ENCODE measurements at regions of chr17 and their contacts with region 1.

Region 1: DNA sequence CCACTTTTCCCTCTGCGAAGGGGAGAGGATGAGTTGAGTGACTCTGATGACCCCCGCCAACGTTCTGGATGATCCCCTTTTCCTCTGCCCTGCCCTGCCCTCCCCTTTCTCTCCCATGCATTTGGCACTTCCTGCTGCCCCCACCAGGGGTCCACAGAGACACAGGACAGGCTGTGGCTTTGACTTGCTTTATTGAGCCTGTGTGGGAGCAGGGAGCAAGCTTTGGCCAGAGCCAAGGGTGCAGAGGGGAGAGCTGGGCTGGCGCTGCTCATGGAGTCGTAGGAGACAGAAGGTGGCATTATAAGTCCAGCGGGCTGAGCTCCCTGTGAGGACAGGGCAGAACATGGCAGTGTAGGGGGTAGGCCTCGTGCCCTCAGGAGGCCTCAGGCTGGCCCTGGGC is 1.6 kb downstream of the PPY start:
- DNase-seq: peak; percentile 77
- ATAC-seq: peak; percentile 74
- H3K4me3 Mint-ChIP-seq: no peak overlapping the region
- H3K27ac Mint-ChIP-seq: no peak overlapping the region
- H3K4me1 Mint-ChIP-seq: peaks cover 20% of the 10 kb centered on the region
- H3K27me3 Mint-ChIP-seq: peaks cover 46% of the 10 kb centered on the region
- CTCF ChIP-seq: peak; percentile 56

Region 2: GRCh38 chr17:43720311-43721060 is 220.1 kb before region 1 on chr17:
- CTCF ChIA-PET with region 1: no interaction called
- POLR2A ChIA-PET with region 1: no interaction called
- DNase-seq: peak; percentile 81
- ATAC-seq: peak; percentile 92
- H3K4me3 Mint-ChIP-seq: peak overlapping the region; percentile 81
- H3K27ac Mint-ChIP-seq: peak overlapping the region; percentile 42
- H3K4me1 Mint-ChIP-seq: peaks cover 33% of the 10 kb centered on the region
- H3K27me3 Mint-ChIP-seq: peaks cover 31% of the 10 kb centered on the region
- CTCF ChIP-seq: no peak

Region 3: GRCh38 chr17:43740541-43740940 is 200.1 kb before region 1 on chr17:
- CTCF ChIA-PET with region 1: no interaction called
- POLR2A ChIA-PET with region 1: no interaction called
- DNase-seq: no peak
- ATAC-seq: no peak
- H3K4me3 Mint-ChIP-seq: no peak overlapping the region
- H3K27ac Mint-ChIP-seq: no peak overlapping the region
- H3K4me1 Mint-ChIP-seq: peaks cover 31% of the 10 kb centered on the region
- H3K27me3 Mint-ChIP-seq: no peaks in the 10 kb centered on the region; the same call in 1 of the 2 replicates
- CTCF ChIP-seq: no peak

Region 4: GRCh38 chr17:43878260-43879175 is 62.1 kb before region 1 on chr17:
- CTCF ChIA-PET with region 1: interaction called, 16 read pairs
- POLR2A ChIA-PET with region 1: no interaction called
- DNase-seq: peak; percentile 89
- ATAC-seq: peak; percentile 83
- H3K4me3 Mint-ChIP-seq: no peak overlapping the region
- H3K27ac Mint-ChIP-seq: no peak overlapping the region
- H3K4me1 Mint-ChIP-seq: peaks cover 14% of the 10 kb centered on the region
- H3K27me3 Mint-ChIP-seq: no peaks in the 10 kb centered on the region
- CTCF ChIP-seq: peak; percentile 91

Region 5: GRCh38 chr17:43917348-43918018 is 23.1 kb before region 1 on chr17:
- CTCF ChIA-PET with region 1: interaction called, 49 read pairs
- POLR2A ChIA-PET with region 1: no interaction called
- DNase-seq: peak; percentile 78
- ATAC-seq: peak; percentile 87
- H3K4me3 Mint-ChIP-seq: peak overlapping the region; percentile 43
- H3K27ac Mint-ChIP-seq: no peak overlapping the region
- H3K4me1 Mint-ChIP-seq: peaks cover 27% of the 10 kb centered on the region
- H3K27me3 Mint-ChIP-seq: peaks cover 14% of the 10 kb centered on the region
- CTCF ChIP-seq: no peak; the same call in 1 of the 2 replicates

Region 6: DNA sequence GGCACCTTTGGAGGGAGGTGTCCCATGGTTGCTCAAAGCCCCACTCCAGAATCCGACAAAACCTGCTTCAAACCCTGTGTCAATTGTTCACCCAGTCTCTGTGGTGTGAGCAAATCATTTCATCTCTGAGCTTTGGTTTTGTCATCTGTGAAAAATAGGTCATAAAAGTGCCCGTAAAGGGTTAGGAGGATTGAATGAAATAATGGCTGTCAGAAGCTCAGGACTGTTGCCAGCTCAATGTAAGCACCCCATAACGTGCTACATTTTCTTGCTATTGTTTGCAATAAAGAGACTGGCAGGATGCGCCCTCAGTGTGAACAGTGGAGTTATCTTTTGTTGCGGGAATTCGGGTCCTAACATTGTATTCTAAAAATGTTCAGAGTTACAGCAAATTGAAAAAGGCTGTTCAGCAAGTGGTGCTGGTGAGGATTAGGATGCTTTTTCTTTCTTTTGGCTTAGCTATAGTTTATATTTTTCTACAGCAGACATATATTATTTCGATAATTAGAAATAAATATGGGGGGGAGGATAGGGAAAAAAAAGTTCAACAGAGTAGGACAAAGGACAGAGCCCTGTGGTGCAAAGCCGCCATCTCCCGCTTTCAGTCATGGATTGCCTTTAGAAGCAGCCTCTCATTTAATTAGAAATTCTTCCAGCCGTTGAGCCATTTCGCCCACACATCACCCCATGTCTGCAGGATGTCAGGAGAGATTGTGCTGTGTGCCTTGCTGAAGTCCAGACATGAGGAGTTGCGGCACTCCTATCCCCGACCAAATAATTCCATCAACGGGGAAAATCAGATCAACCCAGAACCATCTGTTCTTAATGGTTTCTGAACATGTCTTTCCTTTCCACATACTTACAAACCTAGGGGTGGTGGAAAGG is 34.0 kb after region 1 on chr17:
- CTCF ChIA-PET with region 1: interaction called, 15 read pairs
- POLR2A ChIA-PET with region 1: no interaction called
- DNase-seq: no peak
- ATAC-seq: no peak
- H3K4me3 Mint-ChIP-seq: no peak overlapping the region
- H3K27ac Mint-ChIP-seq: no peak overlapping the region
- H3K4me1 Mint-ChIP-seq: no peaks in the 10 kb centered on the region
- H3K27me3 Mint-ChIP-seq: no peaks in the 10 kb centered on the region; the same call in 1 of the 2 replicates
- CTCF ChIP-seq: no peak

Region 7: DNA sequence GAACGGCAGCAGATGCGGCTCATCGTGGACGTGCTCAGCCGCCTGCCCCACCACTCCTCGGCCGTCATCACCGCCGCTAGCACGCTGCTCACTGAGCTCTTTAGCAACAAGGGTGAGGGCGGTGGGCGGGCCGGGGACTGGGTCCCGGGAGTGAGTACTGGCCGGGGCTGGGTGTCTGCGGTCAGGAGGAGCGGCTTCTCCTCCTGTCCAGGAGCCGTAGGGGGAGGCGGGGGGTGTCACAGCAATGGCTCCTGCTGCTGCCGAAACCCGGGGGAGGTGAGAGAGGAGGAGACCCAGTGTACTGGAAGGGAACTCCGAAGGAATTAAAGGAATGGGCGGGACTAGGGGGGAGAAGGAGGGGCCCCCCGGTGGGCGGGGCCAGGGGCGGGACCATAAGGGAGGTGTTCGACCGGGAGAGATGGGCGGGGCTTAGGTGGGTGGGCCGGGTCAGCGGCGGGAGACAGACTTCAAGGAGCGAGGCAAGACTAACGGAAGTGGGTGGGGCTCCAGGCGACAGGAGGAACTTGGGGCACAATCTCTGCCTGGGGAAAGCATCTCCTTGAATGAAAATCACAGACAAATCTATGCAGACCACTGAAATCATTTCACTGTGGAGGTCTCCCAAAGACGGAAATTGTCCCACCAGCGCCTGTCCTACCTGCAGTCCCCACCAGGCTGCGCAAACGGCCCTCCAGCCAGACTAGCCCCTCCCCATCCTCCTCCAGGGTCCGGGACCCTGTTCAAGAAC is 66.1 kb after region 1 on chr17:
- CTCF ChIA-PET with region 1: interaction called, 74 read pairs
- POLR2A ChIA-PET with region 1: interaction called, 4 read pairs
- DNase-seq: peak; percentile 100
- ATAC-seq: peak; percentile 62
- H3K4me3 Mint-ChIP-seq: peak overlapping the region; percentile 92
- H3K27ac Mint-ChIP-seq: peak overlapping the region; percentile 83
- H3K4me1 Mint-ChIP-seq: peaks cover 17% of the 10 kb centered on the region
- H3K27me3 Mint-ChIP-seq: peaks cover 23% of the 10 kb centered on the region
- CTCF ChIP-seq: peak; percentile 50